HepG2 (cell line): ENCODE measurements at regions of chr6 and their contacts with region 1.

Region 1: DNA sequence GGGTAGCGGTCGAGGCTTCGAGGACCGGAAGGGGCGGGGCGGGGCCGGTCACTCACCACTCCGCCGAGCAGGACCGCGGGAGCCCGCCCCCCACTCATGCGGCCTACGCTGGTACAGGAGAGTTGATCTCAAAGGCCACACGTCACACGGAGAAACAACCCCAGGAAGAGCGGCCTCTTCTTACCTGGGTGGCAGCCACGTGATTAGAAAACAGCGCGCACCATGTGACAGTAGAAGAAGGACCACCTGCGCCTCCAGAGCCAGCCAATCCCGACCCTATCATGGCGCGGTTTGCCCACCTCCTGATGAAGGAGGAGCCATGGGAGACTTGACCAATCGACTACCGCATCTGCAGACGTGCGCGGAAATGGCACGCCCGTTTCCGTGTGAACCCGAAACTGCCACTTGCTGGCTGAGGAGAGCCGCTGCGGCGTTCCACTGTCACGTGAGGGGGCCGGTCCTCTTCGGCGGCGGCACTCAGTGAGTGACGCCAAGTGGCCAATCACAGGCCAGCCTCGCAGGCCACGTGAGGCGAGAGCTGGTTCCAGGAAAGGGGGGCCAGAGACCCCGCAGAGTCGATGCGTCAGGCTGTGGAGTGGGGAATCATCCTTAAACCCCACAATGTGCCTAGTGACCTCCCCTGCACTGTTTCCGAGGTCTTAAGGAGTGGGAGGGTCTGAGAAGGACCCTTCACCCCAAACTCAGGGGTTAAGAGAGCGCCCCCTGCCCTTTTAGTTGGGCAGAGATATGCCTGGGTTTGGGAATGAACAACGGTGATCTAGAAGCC is at the start of gene CUTA:
- DNase-seq: peak; percentile 100
- ATAC-seq: peak; percentile 94
- H3K4me3 ChIP-seq: peak within 1 kb of the TSS; percentile 68 to 96 (median 82)
- H3K27ac ChIP-seq: peak within 1 kb of the TSS; percentile 82
- H3K4me1 ChIP-seq: peaks cover 42% of the 10 kb centered on the region
- H3K27me3 ChIP-seq: peaks cover 2 to 21% of the 10 kb centered on the region in 2 experiments; a peak in 3 of 5 replicates
- CTCF ChIP-seq: peak; percentile 76
- EP300 ChIP-seq: peak in 1 of 2 experiments; percentile 6; a peak in 1 of 4 replicates
- POLR2A ChIP-seq: peak in 1 of 2 experiments; percentile 78; a peak in 2 of 4 replicates
- RAD21 ChIP-seq: no peak
- total RNA-seq, gene CUTA: 106 and 180 TPM in 2 replicates

Region 2: DNA sequence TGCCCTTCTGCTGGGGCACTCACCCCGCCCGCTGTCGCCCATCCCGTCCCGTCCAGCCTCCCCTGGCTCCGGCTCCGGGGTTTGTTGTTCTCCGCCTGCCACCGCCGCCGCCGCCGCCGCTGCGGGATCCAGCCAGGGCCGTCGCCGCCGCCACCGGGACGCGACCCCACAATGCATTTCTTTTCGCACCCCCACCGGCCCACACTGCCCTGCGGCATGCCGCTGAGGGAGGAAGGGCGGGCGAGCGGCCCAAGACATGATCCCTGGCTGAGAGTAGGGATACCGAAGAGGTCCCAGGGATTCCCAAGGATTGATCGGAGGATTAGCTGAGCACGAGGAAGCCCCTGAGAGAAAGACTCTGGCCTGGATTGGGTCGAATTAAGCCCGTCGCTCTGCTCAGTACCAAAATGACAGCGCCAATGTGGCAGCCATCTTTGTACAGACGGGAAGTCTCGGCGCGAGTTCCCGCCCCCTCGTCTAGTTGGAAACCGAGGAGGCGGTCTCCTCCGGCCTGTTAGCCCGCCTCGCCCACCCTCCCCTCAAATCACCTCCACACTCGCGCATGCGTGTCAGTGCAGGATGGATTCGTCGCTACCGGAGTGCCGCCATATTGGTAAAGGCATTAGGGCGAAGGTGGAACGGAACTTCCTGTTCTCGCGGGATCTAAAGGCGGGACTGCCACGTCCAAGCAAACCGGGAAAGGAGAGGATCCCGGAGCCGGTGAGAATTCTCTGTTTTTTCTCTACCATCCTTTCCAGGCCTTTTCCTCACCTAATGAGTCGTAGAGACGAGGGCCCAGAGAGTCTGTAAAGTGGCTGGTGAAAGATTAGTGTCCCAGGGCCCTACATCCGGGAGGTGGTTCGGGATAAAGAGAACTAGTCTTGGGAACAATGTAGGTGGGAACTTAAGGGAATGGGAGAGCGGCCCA is 217.6 kb before region 1 on chr6 and contains the starts of genes RXRB and SLC39A7:
- CTCF ChIA-PET with region 1: no interaction called
- POLR2A ChIA-PET with region 1: no interaction called
- in situ Hi-C with region 1: loop called (anchors 10 kb)
- intact Hi-C with region 1: no loop called
- DNase-seq: peak; percentile 100
- ATAC-seq: peak; percentile 48
- H3K4me3 ChIP-seq: peak within 1 kb of the TSS; percentile 87 to 93 (median 93)
- H3K27ac ChIP-seq: peak within 1 kb of the TSS; percentile 99
- H3K4me1 ChIP-seq: peaks cover 66% of the 10 kb centered on the region
- H3K27me3 ChIP-seq: peaks cover 0 to 4% of the 10 kb centered on the region in 2 experiments; a peak in 1 of 5 replicates
- CTCF ChIP-seq: no peak
- EP300 ChIP-seq: peak in 1 of 2 experiments; percentile 17; a peak in 2 of 4 replicates
- POLR2A ChIP-seq: peak in 1 of 2 experiments; percentile 90; a peak in 2 of 4 replicates
- RAD21 ChIP-seq: peak; percentile 28; the same call in 1 of the 2 replicates
- total RNA-seq, gene RXRB: 21.2 and 26.7 TPM in 2 replicates
- total RNA-seq, gene SLC39A7: 127 and 229 TPM in 2 replicates

Region 3: GRCh38 chr6:33299237-33299944 is 118.7 kb before region 1 on chr6:
- CTCF ChIA-PET with region 1: no interaction called
- POLR2A ChIA-PET with region 1: interaction called, 3 read pairs
- in situ Hi-C with region 1: loop called (anchors 25 kb)
- intact Hi-C with region 1: no loop called
- DNase-seq: peak; percentile 88
- ATAC-seq: peak; percentile 73
- H3K4me3 ChIP-seq: peak overlapping the region; percentile 75 to 88 (median 79)
- H3K27ac ChIP-seq: peak overlapping the region; percentile 93
- H3K4me1 ChIP-seq: peaks cover 27% of the 10 kb centered on the region
- H3K27me3 ChIP-seq: no peaks in the 10 kb centered on the region; a peak in 1 of 5 replicates
- CTCF ChIP-seq: peak; percentile 98
- EP300 ChIP-seq: peak in 1 of 2 experiments; percentile 27; a peak in 1 of 4 replicates
- POLR2A ChIP-seq: peak; percentile 88 to 95
- RAD21 ChIP-seq: peak; percentile 74

Region 4: DNA sequence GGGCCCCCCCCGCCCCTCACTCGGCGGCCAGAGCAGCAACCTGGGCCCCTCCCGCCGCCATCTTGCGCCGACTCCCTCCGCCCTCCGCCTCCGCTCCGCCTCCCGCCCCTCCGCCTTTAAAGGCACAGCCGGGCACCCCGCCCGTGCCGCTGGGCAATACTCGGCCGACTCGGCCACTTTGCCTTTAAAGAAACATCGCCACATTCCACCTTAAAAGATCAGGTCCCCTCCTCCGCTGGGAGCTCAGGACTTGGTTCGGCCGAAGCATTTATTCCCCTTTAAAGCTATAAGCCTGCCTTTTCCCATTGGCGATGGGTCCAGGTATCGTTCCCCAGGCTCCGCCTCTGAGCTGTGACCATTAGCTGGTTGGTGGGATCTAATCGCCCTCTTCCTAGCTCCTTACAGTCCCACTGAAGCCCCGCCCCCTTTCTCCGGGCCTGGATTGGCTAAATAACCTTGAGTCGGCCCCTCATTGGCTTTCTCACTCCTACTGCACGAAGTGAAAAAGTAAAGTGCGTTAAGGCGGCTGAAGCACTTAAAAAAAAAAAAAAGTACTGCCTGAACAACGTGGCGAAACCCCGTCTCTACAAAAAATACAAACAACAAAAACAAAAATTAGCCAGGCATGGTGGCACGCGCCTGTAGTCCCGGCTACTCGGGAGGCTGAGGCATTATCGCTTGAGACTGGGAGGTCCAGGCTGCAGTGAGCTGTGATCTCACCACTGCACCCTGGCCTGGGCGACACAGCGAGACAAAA is 100.2 kb before region 1 on chr6 and contains the start of gene ZBTB22:
- CTCF ChIA-PET with region 1: no interaction called
- POLR2A ChIA-PET with region 1: interaction called, 10 read pairs
- in situ Hi-C with region 1: no loop called
- intact Hi-C with region 1: no loop called
- DNase-seq: peak; percentile 99
- ATAC-seq: peak; percentile 79
- H3K4me3 ChIP-seq: peak within 1 kb of the TSS; percentile 71 to 79 (median 73)
- H3K27ac ChIP-seq: peak within 1 kb of the TSS; percentile 82
- H3K4me1 ChIP-seq: peaks cover 55% of the 10 kb centered on the region
- H3K27me3 ChIP-seq: no peaks in the 10 kb centered on the region; a peak in 2 of 5 replicates
- CTCF ChIP-seq: no peak
- EP300 ChIP-seq: no peak
- POLR2A ChIP-seq: no peak
- RAD21 ChIP-seq: no peak
- total RNA-seq, gene ZBTB22: 6.6 and 8.0 TPM in 2 replicates

Region 5: GRCh38 chr6:33391278-33391921 is 26.7 kb before region 1 on chr6 and contains the start of gene KIFC1:
- CTCF ChIA-PET with region 1: no interaction called
- POLR2A ChIA-PET with region 1: interaction called, 8 read pairs
- in situ Hi-C with region 1: no loop called
- intact Hi-C with region 1: loop called (anchors 1 kb)
- DNase-seq: peak; percentile 100
- ATAC-seq: peak; percentile 97
- H3K4me3 ChIP-seq: peak within 1 kb of the TSS; percentile 83 to 95 (median 90)
- H3K27ac ChIP-seq: peak within 1 kb of the TSS; percentile 82
- H3K4me1 ChIP-seq: peaks cover 49% of the 10 kb centered on the region
- H3K27me3 ChIP-seq: no peaks in the 10 kb centered on the region; a peak in 1 of 5 replicates
- CTCF ChIP-seq: peak; percentile 100
- EP300 ChIP-seq: no peak; a peak in 1 of 4 replicates
- POLR2A ChIP-seq: peak; percentile 68 to 81
- RAD21 ChIP-seq: peak; percentile 90
- total RNA-seq, gene KIFC1: 45.5 and 47.6 TPM in 2 replicates

Region 6: DNA sequence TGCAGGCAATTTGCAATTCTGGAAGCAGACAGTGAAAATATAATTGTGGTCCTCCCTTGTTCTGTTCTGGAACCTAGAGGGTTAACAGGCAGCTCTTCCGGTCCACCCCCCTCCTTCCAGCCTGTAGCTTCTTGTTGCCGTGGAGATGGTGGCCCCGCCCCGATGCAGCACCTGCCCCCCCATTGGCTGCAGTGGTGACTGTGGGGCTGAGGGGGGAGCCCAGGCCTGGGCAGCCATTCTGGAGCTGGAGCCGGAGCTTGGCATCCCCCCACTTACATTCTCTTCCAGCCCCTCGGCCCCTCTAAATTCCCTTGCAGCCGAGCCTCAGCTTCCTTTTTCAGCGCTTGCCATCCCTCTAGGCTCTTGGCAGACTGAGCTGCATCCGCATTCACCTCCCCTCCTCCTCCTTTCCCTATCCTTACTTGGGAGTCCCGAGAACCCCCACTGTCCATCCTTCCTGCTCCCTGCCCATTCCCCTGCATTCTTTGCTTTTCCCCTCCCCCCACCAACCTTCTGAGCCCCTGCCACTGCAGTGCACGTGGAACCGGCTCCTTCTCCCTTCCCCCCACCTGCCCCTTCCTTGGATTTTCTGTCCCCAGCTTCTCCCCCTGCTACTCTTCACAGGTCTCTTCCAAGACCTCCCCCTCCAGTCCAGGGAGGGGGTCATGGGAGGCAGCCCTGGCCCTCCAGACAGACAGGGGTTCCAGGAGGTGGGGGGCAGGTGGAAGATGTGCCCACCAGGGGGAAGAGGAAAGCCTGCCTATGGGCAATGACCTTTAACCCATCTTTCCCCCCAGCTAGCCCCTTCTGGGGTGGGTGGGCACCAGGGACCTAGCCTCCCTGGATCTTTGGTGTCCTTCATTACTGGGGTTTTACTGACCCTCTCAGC is 13.1 kb after region 1 on chr6:
- CTCF ChIA-PET with region 1: no interaction called
- POLR2A ChIA-PET with region 1: interaction called, 23 read pairs
- in situ Hi-C with region 1: no loop called
- intact Hi-C with region 1: no loop called
- DNase-seq: peak; percentile 46
- ATAC-seq: peak; percentile 12; the same call in 1 of the 3 replicates
- H3K4me3 ChIP-seq: peak overlapping the region in 1 of 3 experiments; percentile 8; a peak in 1 of 6 replicates
- H3K27ac ChIP-seq: no peak overlapping the region
- H3K4me1 ChIP-seq: peaks cover 42% of the 10 kb centered on the region
- H3K27me3 ChIP-seq: no peaks in the 10 kb centered on the region
- CTCF ChIP-seq: no peak
- EP300 ChIP-seq: no peak
- POLR2A ChIP-seq: no peak
- RAD21 ChIP-seq: no peak

Region 7: GRCh38 chr6:33454009-33454946 is 36.2 kb after region 1 on chr6 and contains the start of gene ZBTB9:
- CTCF ChIA-PET with region 1: no interaction called
- POLR2A ChIA-PET with region 1: interaction called, 14 read pairs
- in situ Hi-C with region 1: no loop called
- intact Hi-C with region 1: no loop called
- DNase-seq: peak; percentile 96
- ATAC-seq: peak; percentile 99
- H3K4me3 ChIP-seq: peak within 1 kb of the TSS; percentile 92 to 100 (median 95)
- H3K27ac ChIP-seq: peak within 1 kb of the TSS; percentile 46
- H3K4me1 ChIP-seq: peaks cover 20% of the 10 kb centered on the region
- H3K27me3 ChIP-seq: no peaks in the 10 kb centered on the region; a peak in 1 of 5 replicates
- CTCF ChIP-seq: peak; percentile 49
- EP300 ChIP-seq: no peak
- POLR2A ChIP-seq: peak; percentile 87 to 98
- RAD21 ChIP-seq: 0 out of 2 replicates have a peak, but pooled peaks have one; percentile 28
- total RNA-seq, gene ZBTB9: 9.2 and 11.5 TPM in 2 replicates